ENCODE measurements at regions of chr11 and their contacts with region 1.

Region 1: GRCh38 chr11:111841370-111842053 is 29.9 kb downstream of the ALG9 start:
- DNase-seq: peak; percentile 46 to 94
- H3K4me3 ChIP-seq: no peak overlapping the region
- H3K27ac ChIP-seq: no peak overlapping the region
- H3K4me1 ChIP-seq: peaks cover 0 to 7% (median 3%) of the 10 kb centered on the region in 4 experiments; a peak in 2 of 7 replicates
- H3K27me3 ChIP-seq: no peaks in the 10 kb centered on the region
- CTCF ChIP-seq: peak; percentile 56 to 91 (median 86)
- EP300 ChIP-seq: no peak
- POLR2A ChIP-seq: no peak
- RAD21 ChIP-seq: peak; percentile 97

Region 2: DNA sequence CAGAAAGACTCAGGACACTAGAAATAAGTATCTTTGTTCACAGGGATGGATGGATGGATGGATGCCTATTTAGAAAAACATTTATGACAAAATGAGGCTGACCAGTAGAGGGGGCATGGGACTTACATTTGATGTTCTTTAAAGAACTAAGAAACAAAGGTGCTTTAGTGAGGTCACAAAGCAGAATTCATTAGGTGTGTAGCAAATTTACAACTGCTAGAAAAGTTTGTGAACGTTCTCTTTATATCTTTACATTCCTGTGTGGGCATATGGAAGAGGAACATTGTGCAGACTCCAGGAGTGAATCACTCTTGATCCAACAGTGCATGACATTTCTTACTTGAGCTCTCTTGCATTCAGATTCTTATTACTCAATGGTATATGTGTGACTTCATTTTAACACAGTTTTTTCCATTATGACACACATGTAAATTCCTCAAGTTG is 255.1 kb before region 1 on chr11:
- CTCF ChIA-PET with region 1: interaction called, 11 read pairs
- POLR2A ChIA-PET with region 1: no interaction called
- DNase-seq: no peak
- H3K4me3 ChIP-seq: no peak overlapping the region
- H3K27ac ChIP-seq: no peak overlapping the region
- H3K4me1 ChIP-seq: peaks cover 0 to 5% (median 0%) of the 10 kb centered on the region in 4 experiments; a peak in 1 of 7 replicates
- H3K27me3 ChIP-seq: no peaks in the 10 kb centered on the region
- CTCF ChIP-seq: peak in 2 of 3 experiments; percentile 37 to 70; a peak in 2 of 4 replicates
- EP300 ChIP-seq: no peak
- POLR2A ChIP-seq: no peak
- RAD21 ChIP-seq: peak; percentile 76 to 78

Region 3: GRCh38 chr11:111807076-111807475 is 34.4 kb before region 1 on chr11:
- CTCF ChIA-PET with region 1: interaction called, 10 read pairs
- POLR2A ChIA-PET with region 1: no interaction called
- DNase-seq: no peak
- H3K4me3 ChIP-seq: no peak overlapping the region
- H3K27ac ChIP-seq: no peak overlapping the region
- H3K4me1 ChIP-seq: no peaks in the 10 kb centered on the region
- H3K27me3 ChIP-seq: no peaks in the 10 kb centered on the region
- CTCF ChIP-seq: no peak
- EP300 ChIP-seq: no peak
- POLR2A ChIP-seq: no peak
- RAD21 ChIP-seq: no peak

Region 4: DNA sequence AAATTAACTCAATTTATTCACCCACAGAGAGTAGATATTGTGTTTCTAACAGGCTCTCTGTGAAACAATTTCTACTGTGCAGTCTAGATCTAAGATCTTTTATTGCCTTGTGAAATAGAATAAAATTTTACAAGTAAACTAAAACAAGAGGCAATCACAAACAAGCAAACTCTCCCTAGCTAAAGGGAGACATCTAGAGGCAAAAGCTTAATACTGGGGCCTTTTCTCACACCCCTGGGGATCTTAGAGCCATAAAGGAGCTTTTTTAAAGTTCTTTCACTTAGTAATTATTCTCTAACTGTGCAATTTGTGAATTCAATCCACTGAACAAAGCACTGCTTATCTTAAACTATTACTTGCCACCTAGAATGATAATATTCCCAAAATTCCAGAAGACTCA is 10.1 kb after region 1 on chr11:
- CTCF ChIA-PET with region 1: interaction called, 12 read pairs
- POLR2A ChIA-PET with region 1: no interaction called
- DNase-seq: no peak
- H3K4me3 ChIP-seq: no peak overlapping the region
- H3K27ac ChIP-seq: no peak overlapping the region
- H3K4me1 ChIP-seq: no peaks in the 10 kb centered on the region; a peak in 1 of 7 replicates
- H3K27me3 ChIP-seq: no peaks in the 10 kb centered on the region
- CTCF ChIP-seq: peak in 2 of 3 experiments; percentile 18 to 41; a peak in 2 of 4 replicates
- EP300 ChIP-seq: no peak
- POLR2A ChIP-seq: no peak
- RAD21 ChIP-seq: peak; percentile 40 to 56